Heart left ventricle (tissue), 16 donors: ENCODE measurements at regions of chr10 and their contacts with region 1.

Region 1: GRCh38 chr10:131874991-131875451 is 25.8 kb upstream of the PPP2R2D start:
- DNase-seq: peak; percentile 61 to 84 (median 76)
- ATAC-seq: peak; percentile 44 to 76 (median 73)
- H3K4me3 ChIP-seq: no peak overlapping the region
- H3K27ac ChIP-seq: no peak overlapping the region
- H3K4me1 ChIP-seq: peaks cover 0 to 7% (median 0%) of the 10 kb centered on the region in 12 donors
- H3K27me3 ChIP-seq: peaks cover 0 to 38% (median 0%) of the 10 kb centered on the region in 9 donors
- CTCF ChIP-seq: peak; percentile 50 to 80 (median 66)
- POLR2A ChIP-seq: no peak

Region 2: DNA sequence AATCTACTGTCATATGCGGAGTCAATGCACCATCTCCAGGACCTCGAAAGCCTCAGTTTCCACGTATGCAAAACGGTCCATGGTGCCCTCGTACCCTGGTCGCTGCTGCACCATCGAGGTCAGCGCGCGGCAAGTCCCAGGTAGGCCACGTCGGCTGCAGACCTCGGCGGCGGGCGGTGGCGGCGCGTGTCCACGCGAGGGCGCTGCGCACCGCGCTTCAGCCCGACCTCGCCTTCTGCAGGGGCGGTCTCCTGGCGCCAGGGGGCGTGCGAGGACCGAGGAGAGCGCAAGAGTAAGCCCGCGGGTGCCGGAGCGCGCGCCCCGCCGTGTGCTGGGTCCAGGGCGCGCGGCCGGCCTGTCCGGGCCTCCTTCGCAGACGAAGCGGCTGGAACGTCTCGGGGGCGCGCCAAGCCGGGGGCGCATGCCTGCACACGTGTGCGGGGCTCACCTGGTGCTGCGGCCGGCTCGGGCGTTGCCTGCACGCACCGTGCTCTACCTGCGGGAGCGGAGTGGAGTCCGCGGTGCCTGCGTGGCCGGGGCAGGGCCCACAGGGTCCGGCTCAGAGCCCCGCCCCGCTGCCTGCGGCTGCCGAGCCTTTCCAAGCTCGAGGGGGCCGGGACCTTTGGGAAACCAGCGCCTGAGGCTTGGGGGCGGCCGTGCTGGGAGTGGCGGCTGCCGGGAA is 1684.8 kb before region 1 on chr10:
- intact Hi-C with region 1: loop called in 8 of 10 experiments (anchors 2 to 10 kb)
- DNase-seq: peak; percentile 83 to 94 (median 89)
- ATAC-seq: peak; percentile 56 to 91 (median 84)
- H3K4me3 ChIP-seq: peak overlapping the region; percentile 16 to 82 (median 56)
- H3K27ac ChIP-seq: no peak overlapping the region
- H3K4me1 ChIP-seq: peaks cover 0 to 29% (median 6%) of the 10 kb centered on the region in 12 donors
- H3K27me3 ChIP-seq: peaks cover 0 to 10% (median 0%) of the 10 kb centered on the region in 9 donors
- CTCF ChIP-seq: peak; percentile 100
- POLR2A ChIP-seq: no peak

Region 3: DNA sequence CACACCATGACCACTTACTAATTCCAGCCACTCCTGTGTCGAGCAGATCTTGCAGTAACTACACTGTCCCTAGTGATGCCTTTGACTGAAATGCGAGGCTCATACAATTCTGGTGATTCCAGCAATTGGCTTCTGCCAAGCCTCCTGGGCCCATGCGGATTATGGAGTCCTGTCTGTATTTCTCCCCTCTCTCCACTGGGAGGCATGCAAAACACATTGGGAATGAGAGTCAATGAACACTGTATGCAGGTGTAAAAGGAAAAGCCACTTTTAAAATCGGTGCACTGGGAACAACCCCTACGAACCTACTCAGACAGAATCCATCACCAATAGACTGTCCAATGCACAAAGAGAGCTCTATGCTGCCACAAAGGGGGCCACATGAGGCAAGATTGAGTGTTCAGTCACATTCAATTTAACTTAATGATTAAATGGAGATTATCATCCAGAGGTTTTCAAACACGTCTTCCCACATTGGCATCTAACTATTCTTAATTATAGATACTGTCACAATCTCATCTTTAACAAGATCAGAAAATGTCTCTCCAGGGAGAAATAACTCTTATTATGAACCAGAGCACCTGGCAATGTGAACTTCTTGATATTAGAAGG is 1188.2 kb before region 1 on chr10:
- intact Hi-C with region 1: no loop called
- DNase-seq: no peak
- ATAC-seq: peak in 1 of 4 donors; percentile 46
- H3K4me3 ChIP-seq: no peak overlapping the region
- H3K27ac ChIP-seq: no peak overlapping the region
- H3K4me1 ChIP-seq: no peaks in the 10 kb centered on the region
- H3K27me3 ChIP-seq: peaks cover 0 to 2% (median 0%) of the 10 kb centered on the region in 9 donors
- CTCF ChIP-seq: peak in 9 of 12 donors; percentile 10 to 40 (median 33)
- POLR2A ChIP-seq: no peak

Region 4: DNA sequence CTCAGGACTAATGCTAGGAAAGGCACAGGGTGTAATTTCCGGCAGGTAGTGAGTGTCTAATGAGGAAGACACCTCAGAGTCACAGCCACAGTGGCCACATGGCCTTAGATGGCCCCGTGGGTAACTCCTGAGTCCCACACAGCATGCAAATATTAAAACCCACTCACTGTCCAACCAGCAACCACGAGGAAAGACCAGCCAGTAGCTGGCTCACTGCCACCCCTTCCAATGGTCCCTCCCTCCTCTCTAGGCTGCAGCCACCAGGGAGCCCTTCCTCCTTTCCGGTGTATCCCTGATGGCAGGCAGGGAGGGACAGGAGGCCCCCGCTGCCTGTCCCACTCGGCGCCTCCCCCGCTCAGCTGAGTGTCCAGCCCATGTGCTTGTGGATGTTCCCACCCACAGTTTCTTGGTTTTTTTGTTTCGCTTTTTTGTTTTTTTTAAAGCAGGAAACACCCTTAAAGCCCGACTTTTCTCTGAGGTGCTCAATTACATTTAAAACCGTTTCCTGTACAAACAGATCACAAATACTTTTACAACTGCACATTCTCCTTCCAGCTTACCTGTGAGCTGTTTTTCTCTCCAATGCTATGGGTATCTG is 97.6 kb after region 1 on chr10:
- intact Hi-C with region 1: no loop called
- DNase-seq: peak; percentile 78 to 85 (median 84)
- ATAC-seq: peak; percentile 70 to 89 (median 73)
- H3K4me3 ChIP-seq: peak overlapping the region in 8 of 12 donors; percentile 5 to 24 (median 10)
- H3K27ac ChIP-seq: peak overlapping the region in 11 of 12 donors; percentile 40 to 82 (median 72)
- H3K4me1 ChIP-seq: peaks cover 10 to 55% (median 32%) of the 10 kb centered on the region in 12 donors
- H3K27me3 ChIP-seq: no peaks in the 10 kb centered on the region
- CTCF ChIP-seq: no peak
- POLR2A ChIP-seq: no peak